Transverse colon (tissue), 4 donors: ENCODE measurements at regions of chr2 and their contacts with region 1.

Region 1: GRCh38 chr2:219388127-219388844 is 574 bp upstream of the DNPEP start:
- DNase-seq: peak; percentile 99
- H3K4me3 ChIP-seq: peak overlapping the region; percentile 11 to 83 (median 54)
- H3K27ac ChIP-seq: peak overlapping the region; percentile 93 to 100 (median 97)
- H3K4me1 ChIP-seq: peaks cover 10 to 18% (median 14%) of the 10 kb centered on the region in 4 donors
- H3K27me3 ChIP-seq: no peaks in the 10 kb centered on the region
- CTCF ChIP-seq: peak; percentile 52 to 88 (median 62)
- EP300 ChIP-seq: no peak
- POLR2A ChIP-seq: no peak

Region 2: GRCh38 chr2:218229239-218229638 is 1159.0 kb before region 1 on chr2:
- in situ Hi-C with region 1: no loop called
- intact Hi-C with region 1: loop called (anchors 10 kb)
- DNase-seq: no peak
- H3K4me3 ChIP-seq: no peak overlapping the region
- H3K27ac ChIP-seq: peak overlapping the region; percentile 77 to 83 (median 79)
- H3K4me1 ChIP-seq: peaks cover 27 to 57% (median 34%) of the 10 kb centered on the region in 4 donors
- H3K27me3 ChIP-seq: no peaks in the 10 kb centered on the region
- CTCF ChIP-seq: no peak
- EP300 ChIP-seq: no peak
- POLR2A ChIP-seq: no peak

Region 3: DNA sequence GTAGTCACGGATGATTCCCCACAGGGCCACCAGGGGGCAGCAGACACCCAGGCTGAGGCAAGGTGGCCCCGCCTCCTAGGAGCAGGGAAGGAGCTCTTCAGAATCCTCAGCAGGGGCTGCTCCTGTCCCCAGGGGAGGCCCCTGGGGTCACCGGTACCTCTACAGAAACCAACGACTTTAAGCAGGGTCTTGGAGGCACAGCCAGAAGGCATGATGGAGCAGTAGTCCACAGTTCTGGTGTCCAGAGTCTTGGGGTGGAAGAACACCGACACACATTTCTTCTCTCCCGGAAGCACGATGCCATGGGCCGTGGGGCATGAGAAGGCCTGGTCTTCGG is 358.5 kb before region 1 on chr2:
- in situ Hi-C with region 1: no loop called
- intact Hi-C with region 1: no loop called
- DNase-seq: peak; percentile 87
- H3K4me3 ChIP-seq: no peak overlapping the region
- H3K27ac ChIP-seq: no peak overlapping the region
- H3K4me1 ChIP-seq: no peaks in the 10 kb centered on the region
- H3K27me3 ChIP-seq: peaks cover 15% of the 10 kb centered on the region
- CTCF ChIP-seq: peak; percentile 88 to 98 (median 95)
- EP300 ChIP-seq: no peak
- POLR2A ChIP-seq: no peak

Region 4: DNA sequence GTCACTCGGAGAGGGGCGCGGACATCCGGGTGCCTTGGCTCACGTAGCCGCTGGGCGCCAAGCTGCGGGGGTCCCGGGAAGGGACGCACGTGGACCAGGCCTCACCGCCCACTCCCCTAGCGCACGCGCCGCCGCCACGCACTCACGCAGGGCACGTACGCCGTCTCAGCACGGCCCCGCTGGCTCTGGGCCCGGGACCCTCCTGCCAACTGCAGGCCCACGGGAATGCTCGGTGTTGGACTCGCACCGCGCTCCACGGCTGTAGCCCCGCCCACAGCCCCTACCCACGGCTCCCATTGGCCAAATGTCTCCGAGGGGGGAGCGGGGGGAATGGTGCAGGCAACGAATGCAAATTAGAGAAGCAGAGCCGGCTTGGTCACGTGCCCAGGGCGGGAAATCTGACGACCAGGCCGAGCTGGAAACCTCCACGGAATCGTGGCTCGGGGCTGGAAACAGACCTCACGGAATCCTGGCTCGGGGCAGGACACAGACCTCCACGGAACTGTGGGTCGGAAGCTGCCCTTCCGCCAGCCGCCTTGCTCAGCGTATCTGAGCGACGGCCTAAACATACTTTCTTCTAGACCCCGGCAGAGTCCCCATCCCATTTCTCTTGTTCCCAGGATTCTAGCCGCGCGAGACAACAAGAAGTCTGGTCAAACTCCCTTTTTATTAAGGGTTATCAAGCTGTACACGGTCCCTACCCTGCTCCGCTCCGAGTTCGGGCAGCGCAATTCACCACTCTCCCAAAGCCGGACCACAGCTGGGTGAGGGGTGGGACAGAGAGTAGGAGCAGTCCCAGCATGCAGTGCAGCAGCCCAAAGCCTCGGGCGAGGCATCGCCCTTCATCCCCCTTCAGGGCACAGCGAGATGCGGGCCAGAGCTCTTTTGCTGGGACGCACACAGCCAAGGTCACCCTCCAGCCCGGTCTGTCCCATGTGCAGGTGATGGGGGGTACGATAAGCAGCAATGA is 169.3 kb before region 1 on chr2 and contains the start of gene ABCB6:
- in situ Hi-C with region 1: no loop called
- intact Hi-C with region 1: no loop called
- DNase-seq: peak; percentile 96
- H3K4me3 ChIP-seq: peak within 1 kb of the TSS; percentile 36 to 59 (median 50)
- H3K27ac ChIP-seq: peak within 1 kb of the TSS; percentile 90 to 98 (median 95)
- H3K4me1 ChIP-seq: peaks cover 19 to 37% (median 30%) of the 10 kb centered on the region in 4 donors
- H3K27me3 ChIP-seq: no peaks in the 10 kb centered on the region
- CTCF ChIP-seq: no peak
- EP300 ChIP-seq: no peak
- POLR2A ChIP-seq: peak; percentile 60
- total RNA-seq, gene ABCB6: 3.4 to 28.7 (median 20.4) TPM

Region 5: GRCh38 chr2:219368690-219369195 is 19.5 kb before region 1 on chr2:
- in situ Hi-C with region 1: no loop called
- intact Hi-C with region 1: no loop called
- DNase-seq: no peak
- H3K4me3 ChIP-seq: no peak overlapping the region
- H3K27ac ChIP-seq: peak overlapping the region in 3 of 4 donors; percentile 6 to 32 (median 18)
- H3K4me1 ChIP-seq: peaks cover 0 to 7% (median 5%) of the 10 kb centered on the region in 4 donors
- H3K27me3 ChIP-seq: no peaks in the 10 kb centered on the region
- CTCF ChIP-seq: no peak
- EP300 ChIP-seq: no peak
- POLR2A ChIP-seq: no peak